Right ventricle myocardium superior (tissue), 1 donor: ENCODE measurements at regions of chr1 and their contacts with region 1.

Region 1: GRCh38 chr1:220680085-220680687 is 10.0 kb upstream of the C1orf115 start:
- DNase-seq: no peak
- ATAC-seq: peak; percentile 87

Region 2: DNA sequence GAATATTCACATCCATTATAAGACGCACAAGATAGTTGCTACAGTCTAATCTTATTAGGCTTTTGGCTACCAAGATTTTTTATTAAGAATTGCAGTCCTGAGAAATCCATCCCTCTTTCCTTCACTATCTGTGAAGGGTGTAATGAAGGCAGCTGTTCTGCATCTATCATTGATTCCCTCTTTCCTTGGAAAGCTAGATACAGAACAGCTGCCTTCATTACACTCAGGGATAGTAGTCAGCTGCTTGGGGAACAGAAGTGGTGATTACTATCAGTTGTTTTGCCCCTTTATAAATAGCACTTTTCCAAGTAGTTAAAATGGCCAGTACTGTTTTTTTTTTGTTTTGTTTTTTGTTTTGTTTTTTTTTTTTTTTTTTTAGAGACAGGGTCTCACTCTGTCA is 516.1 kb before region 1 on chr1:
- intact Hi-C with region 1: no loop called
- DNase-seq: no peak
- ATAC-seq: peak; percentile 52

Region 3: DNA sequence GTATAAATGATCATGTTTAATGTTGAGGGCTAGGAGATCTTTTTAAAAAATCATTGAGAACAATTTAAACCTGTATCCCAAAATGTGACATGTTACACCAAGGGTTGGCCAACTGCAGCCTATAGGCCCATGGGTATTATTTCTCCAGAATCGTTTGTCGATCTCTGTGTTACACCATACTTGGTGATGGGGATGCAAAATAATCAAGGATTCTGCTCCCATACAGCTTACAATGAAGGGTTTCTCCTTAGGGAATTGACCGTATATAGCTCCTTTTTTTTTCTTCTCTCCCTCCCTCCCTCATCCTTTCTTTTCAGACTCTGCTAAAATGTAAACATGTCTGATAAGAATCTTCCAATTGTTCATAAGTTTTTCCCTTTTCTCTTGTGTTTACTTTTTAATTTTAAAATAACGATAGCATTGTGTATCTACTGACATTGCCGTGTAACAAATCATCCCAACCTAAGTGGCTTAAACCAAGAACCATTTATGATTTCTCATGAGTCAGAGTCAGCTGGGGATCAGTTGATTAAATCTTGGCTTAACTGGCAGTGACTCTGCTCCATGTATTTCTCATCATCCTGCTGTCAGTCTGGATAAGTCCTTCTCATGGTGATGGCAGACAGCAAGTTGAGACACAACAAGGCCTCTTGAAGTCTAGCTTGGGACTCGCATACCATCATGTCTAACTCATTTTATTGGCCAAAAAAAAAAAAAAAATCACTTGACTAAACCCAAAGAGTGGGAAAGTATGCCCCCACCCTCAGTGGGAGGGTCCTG is 104.3 kb before region 1 on chr1:
- intact Hi-C with region 1: no loop called
- DNase-seq: no peak
- ATAC-seq: no peak

Region 4: DNA sequence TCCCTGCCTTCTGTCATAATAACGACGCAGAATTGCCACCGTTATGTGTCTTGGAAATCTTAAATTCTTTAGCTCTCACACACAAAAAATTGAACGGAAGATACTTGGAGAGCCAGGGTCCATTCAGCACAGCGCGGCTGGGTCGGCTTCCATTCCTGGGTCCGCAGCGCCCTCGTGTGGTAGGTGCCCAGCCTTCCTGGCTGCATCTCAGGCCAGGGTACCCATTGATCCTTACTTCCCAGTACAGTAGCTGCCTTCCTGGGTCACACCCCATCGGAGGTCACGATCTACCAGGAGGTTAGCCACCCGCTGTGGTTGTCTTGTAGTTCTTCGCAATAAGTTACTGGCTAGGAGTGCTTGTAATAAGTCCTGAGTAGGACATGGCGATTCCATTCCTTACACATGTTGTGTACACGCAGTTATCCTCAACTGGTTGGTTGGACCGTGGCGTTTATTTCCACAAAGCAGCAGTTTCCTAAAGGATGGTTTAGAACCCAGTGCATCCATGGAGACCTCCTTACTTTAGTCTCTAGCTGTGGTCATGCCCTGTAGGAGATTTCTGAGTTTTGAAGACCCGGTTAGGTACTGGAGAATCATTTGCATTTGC is 96.6 kb after region 1 on chr1:
- intact Hi-C with region 1: loop called (anchors 5 kb)
- DNase-seq: peak; percentile 91
- ATAC-seq: peak; percentile 98